ENCODE measurements at regions of chr2 and their contacts with region 1.

Region 1: GRCh38 chr2:238847841-238848690 is at the start of gene TWIST2:
- DNase-seq: peak; percentile 73
- H3K4me3 ChIP-seq: peak within 1 kb of the TSS; percentile 48 to 54
- H3K27ac ChIP-seq: peak within 1 kb of the TSS; percentile 86
- H3K4me1 ChIP-seq: no peaks in the 10 kb centered on the region
- H3K27me3 ChIP-seq: peaks cover 11% of the 10 kb centered on the region
- CTCF ChIP-seq: peak in 1 of 4 experiments; percentile 25
- POLR2A ChIP-seq: no peak
- total RNA-seq, gene TWIST2: 23.5 to 52.9 TPM

Region 2: GRCh38 chr2:238585836-238586821 is 261.9 kb before region 1 on chr2:
- intact Hi-C with region 1: no loop called
- DNase-seq: no peak
- H3K4me3 ChIP-seq: no peak overlapping the region
- H3K27ac ChIP-seq: no peak overlapping the region
- H3K4me1 ChIP-seq: no peaks in the 10 kb centered on the region
- H3K27me3 ChIP-seq: no peaks in the 10 kb centered on the region
- CTCF ChIP-seq: no peak
- POLR2A ChIP-seq: no peak

Region 3: GRCh38 chr2:238895891-238896600 is 48.0 kb after region 1 on chr2:
- intact Hi-C with region 1: loop called (anchors 2 kb)
- DNase-seq: no peak
- H3K4me3 ChIP-seq: no peak overlapping the region
- H3K27ac ChIP-seq: peak overlapping the region; percentile 46 to 56
- H3K4me1 ChIP-seq: peaks cover 7% of the 10 kb centered on the region
- H3K27me3 ChIP-seq: no peaks in the 10 kb centered on the region
- CTCF ChIP-seq: no peak
- POLR2A ChIP-seq: no peak

Region 4: GRCh38 chr2:238945433-238946150 is 97.5 kb after region 1 on chr2:
- intact Hi-C with region 1: loop called (anchors 5 kb)
- DNase-seq: no peak
- H3K4me3 ChIP-seq: no peak overlapping the region
- H3K27ac ChIP-seq: no peak overlapping the region
- H3K4me1 ChIP-seq: no peaks in the 10 kb centered on the region
- H3K27me3 ChIP-seq: no peaks in the 10 kb centered on the region
- CTCF ChIP-seq: peak; percentile 38 to 64 (median 50)
- POLR2A ChIP-seq: no peak

Measured in prostate gland (tissue), 2 donors.